Activated T-helper 2 cell treated with anti-CD3 and anti-CD28 coated beads, Interferon-gamma antibody, Interleukin-2, Interleukin-4, amounts not matched to agents 10 μg/mL and 5 μg/mL and 100 μg/mL, durations not matched to agents 14 hours and 24 hours and 36 hours (primary cell): ENCODE measurements at regions of chr16 and their contacts with region 1.

Region 1: DNA sequence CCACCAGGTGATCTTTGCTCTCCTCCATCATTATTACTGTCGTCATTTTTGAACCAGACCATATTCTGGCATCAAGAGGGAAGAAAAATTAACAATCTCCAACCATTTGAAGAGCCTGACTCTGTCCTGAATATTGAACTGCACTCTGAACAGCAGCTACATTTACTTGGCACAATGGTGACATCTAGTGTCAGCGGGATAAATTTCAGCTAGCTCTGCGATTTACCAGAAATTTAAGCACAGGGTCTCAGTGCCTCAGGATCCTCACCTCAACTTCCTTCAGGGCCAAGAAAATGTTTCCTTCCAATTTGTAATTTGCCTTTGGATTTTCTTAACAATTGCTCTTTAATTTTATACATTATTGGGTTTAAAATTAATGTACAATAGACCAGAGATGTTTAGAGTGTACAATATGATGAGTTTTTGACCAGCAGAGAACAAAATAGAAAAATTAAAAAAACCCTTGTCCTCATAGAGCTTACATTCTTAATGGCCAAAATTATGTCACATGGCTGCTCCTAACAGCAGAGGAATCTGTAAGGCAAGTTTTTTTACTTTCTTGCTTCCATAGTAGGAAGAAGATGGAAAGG is 10.7 kb upstream of the ZNF19 start:
- DNase-seq: peak; percentile 18
- H3K4me3 Mint-ChIP-seq: no peak overlapping the region
- H3K27ac Mint-ChIP-seq: no peak overlapping the region
- H3K4me1 Mint-ChIP-seq: no peaks in the 10 kb centered on the region
- H3K27me3 Mint-ChIP-seq: peaks cover 2% of the 10 kb centered on the region

Region 2: GRCh38 chr16:70691223-70692129 is 808.4 kb before region 1 on chr16:
- intact Hi-C with region 1: no loop called
- DNase-seq: no peak
- H3K4me3 Mint-ChIP-seq: no peak overlapping the region
- H3K27ac Mint-ChIP-seq: no peak overlapping the region
- H3K4me1 Mint-ChIP-seq: peaks cover 10% of the 10 kb centered on the region
- H3K27me3 Mint-ChIP-seq: peaks cover 2% of the 10 kb centered on the region

Region 3: GRCh38 chr16:71412270-71413160 is 87.4 kb before region 1 on chr16:
- intact Hi-C with region 1: loop called (anchors 1 kb)
- DNase-seq: peak; percentile 46
- H3K4me3 Mint-ChIP-seq: no peak overlapping the region
- H3K27ac Mint-ChIP-seq: no peak overlapping the region
- H3K4me1 Mint-ChIP-seq: peaks cover 8% of the 10 kb centered on the region
- H3K27me3 Mint-ChIP-seq: peaks cover 19% of the 10 kb centered on the region

Region 4: GRCh38 chr16:71441348-71441781 is 58.5 kb before region 1 on chr16:
- intact Hi-C with region 1: loop called (anchors 5 kb)
- DNase-seq: no peak
- H3K4me3 Mint-ChIP-seq: no peak overlapping the region
- H3K27ac Mint-ChIP-seq: no peak overlapping the region
- H3K4me1 Mint-ChIP-seq: no peaks in the 10 kb centered on the region
- H3K27me3 Mint-ChIP-seq: no peaks in the 10 kb centered on the region